Natural killer cell (primary cell): ENCODE measurements at regions of chr5 and their contacts with region 1.

Region 1: DNA sequence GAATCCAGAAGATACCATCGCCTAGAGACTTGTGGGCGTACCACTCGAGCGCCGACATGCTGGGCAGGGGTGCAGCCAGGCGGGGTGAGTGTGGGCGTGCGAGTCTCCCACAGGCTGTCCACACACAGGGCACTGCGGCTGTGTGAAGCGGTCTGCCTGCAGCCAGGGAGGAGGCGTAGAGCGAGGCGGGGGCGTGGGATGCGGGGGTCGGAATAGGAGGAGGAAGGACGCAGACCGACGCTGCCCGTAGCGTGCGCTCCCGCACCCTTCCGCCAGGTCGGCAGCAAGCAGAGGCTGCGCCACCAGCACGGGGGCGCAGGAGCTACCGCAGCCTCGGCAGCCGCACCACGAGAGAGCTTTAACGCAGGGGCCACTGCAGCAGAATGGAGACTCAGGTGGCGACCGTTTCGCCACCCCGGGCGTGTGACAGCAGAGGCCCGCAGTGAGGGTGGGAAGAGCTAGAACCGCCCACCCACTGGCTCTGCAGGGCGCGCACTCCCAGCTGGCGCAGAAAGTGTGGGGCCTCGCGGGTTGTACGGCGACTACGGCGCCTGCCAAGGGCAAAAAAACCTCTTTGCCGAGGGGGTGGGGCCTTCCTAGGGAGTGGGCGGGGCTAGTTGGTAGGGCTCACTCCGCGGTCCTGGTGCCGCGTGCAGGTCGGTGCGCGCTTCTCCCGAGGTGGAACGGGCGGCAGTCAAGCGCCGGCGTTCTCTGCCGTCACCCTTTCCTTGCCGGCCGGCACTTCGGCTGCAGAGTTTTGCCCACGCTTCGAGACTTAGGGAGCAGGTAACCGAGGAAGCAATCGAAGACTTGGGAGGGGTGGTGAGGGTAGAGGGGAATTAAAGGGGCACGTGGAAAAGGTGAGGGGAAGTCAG is at the starts of genes MBLAC2 and POLR3G:
- DNase-seq: peak; percentile 83 to 95
- ATAC-seq: peak; percentile 89 to 96 (median 91)
- H3K4me3 ChIP-seq: peak within 1 kb of the TSS; percentile 92
- H3K4me3 Mint-ChIP-seq: peak within 1 kb of the TSS; percentile 98
- H3K27ac ChIP-seq: peak within 1 kb of the TSS; percentile 65
- H3K27ac Mint-ChIP-seq: peak within 1 kb of the TSS; percentile 87 to 93
- H3K4me1 ChIP-seq: peaks cover 15% of the 10 kb centered on the region
- H3K4me1 Mint-ChIP-seq: peaks cover 38 to 42% of the 10 kb centered on the region in 2 donors
- H3K27me3 ChIP-seq: no peaks in the 10 kb centered on the region
- H3K27me3 Mint-ChIP-seq: no peaks in the 10 kb centered on the region
- CTCF ChIP-seq: peak; percentile 38
- total RNA-seq, gene MBLAC2: 2.9 to 4.8 (median 3.5) TPM
- total RNA-seq, gene POLR3G: 0.40 to 1.4 (median 0.99) TPM

Region 2: DNA sequence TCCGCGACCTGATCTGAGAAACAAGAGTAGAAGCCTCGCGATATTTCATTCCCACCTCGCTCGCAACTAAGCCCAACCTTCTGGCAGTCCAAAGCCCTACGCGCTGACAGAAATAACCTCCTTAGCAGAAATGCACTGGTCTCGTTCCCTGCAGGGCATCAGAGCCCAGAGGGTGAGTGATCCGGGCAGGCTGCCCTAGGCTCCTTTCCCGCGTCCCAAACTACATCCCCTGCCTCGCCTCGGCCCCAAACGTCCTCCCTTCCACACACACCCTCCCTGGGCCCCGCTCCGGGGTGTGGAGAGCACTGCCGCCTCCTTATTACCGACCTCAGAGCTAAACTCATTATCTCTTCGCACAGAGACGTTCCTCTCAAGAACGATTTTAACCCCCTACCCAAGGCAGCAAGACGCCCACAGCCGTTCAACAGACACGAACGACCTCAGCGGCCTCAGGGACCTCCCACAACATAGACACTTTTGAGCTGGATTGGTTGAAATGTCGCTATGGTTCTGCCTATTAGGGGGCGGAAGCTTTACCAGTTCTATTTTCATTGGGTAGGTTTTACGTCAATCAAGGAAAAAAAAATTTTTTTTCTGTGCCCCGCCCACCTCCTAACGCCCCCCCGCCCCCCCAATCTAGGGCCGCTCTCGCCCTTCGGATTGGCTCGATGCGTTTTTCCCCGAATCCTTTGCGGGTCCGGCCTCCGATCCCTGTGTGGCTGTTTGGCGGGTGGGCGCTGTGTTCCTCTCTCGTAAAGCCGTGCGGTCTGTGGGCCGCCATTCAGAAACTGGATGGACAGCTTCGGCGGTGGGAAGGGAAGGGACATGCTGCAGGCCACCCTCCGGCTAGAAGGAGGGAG is 64.9 kb before region 1 on chr5 and contains the start of gene CETN3:
- intact Hi-C with region 1: loop called (anchors 1 kb)
- DNase-seq: peak; percentile 83 to 95
- ATAC-seq: peak; percentile 89 to 97 (median 91)
- H3K4me3 ChIP-seq: peak within 1 kb of the TSS; percentile 85
- H3K4me3 Mint-ChIP-seq: no peak within 1 kb of the TSS
- H3K27ac ChIP-seq: peak within 1 kb of the TSS; percentile 91
- H3K27ac Mint-ChIP-seq: no peak within 1 kb of the TSS
- H3K4me1 ChIP-seq: peaks cover 7% of the 10 kb centered on the region
- H3K4me1 Mint-ChIP-seq: no peaks in the 10 kb centered on the region
- H3K27me3 ChIP-seq: no peaks in the 10 kb centered on the region
- H3K27me3 Mint-ChIP-seq: peaks cover 0 to 6% of the 10 kb centered on the region in 2 donors
- CTCF ChIP-seq: no peak
- total RNA-seq, gene CETN3: 3.2 to 8.5 (median 4.0) TPM

Region 3: DNA sequence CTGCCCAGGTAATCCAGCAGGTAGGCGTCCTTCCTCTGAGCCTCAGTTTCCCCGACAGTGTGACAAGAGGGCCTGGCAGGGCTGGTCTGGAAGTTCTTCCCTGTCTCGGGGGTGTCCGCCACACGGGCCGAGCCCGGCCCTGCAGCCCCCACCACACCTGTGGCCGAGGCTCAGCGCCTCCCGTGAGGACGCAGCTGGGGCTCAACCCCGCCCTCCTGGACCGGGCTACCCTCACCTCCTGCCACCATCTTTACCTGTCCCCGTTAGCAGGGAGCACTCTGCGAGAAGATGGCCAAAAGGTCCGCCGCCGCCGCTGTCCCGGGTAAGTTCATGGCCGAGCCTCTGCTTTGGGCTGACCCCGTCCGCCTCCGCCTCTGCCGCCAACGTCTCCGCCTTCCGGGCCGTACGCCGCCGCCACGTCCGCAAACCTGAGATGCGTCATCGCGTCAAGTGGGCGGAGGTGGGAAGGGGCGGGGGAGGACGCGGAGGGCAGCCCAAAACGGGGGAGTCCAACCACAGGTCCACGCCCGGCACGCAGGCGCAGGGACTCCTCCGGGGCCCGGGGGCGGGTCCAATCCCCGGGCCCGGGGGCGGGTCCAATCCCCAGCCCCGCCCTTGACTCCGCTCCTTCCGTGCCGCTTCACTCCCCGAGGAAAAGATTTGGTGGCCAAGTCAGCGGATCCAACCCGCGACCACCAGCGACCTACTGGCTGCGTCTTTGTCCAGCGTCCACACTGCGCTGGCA is 54.9 kb after region 1 on chr5 and contains the start of gene LYSMD3:
- intact Hi-C with region 1: loop called (anchors 1 kb)
- DNase-seq: peak; percentile 97 to 98
- ATAC-seq: peak; percentile 88 to 98 (median 91)
- H3K4me3 ChIP-seq: peak within 1 kb of the TSS; percentile 89
- H3K4me3 Mint-ChIP-seq: peak within 1 kb of the TSS; percentile 95
- H3K27ac ChIP-seq: peak within 1 kb of the TSS; percentile 93
- H3K27ac Mint-ChIP-seq: peak within 1 kb of the TSS; percentile 90 to 93
- H3K4me1 ChIP-seq: peaks cover 12% of the 10 kb centered on the region
- H3K4me1 Mint-ChIP-seq: peaks cover 21 to 37% of the 10 kb centered on the region in 2 donors
- H3K27me3 ChIP-seq: peaks cover 10% of the 10 kb centered on the region
- H3K27me3 Mint-ChIP-seq: peaks cover 19 to 35% of the 10 kb centered on the region in 2 donors
- CTCF ChIP-seq: no peak
- total RNA-seq, gene LYSMD3: 15.2 to 27.9 (median 19.5) TPM